Mammary epithelial cell (primary cell): ENCODE measurements at regions of chr7 and their contacts with region 1.

Region 1: GRCh38 chr7:144416341-144416740 is 12.8 kb upstream of the NOBOX start:
- DNase-seq: peak; percentile 88
- H3K4me3 ChIP-seq: no peak overlapping the region
- H3K27ac ChIP-seq: peak overlapping the region; percentile 78
- H3K4me1 ChIP-seq: peaks cover 30% of the 10 kb centered on the region
- H3K27me3 ChIP-seq: no peaks in the 10 kb centered on the region
- CTCF ChIP-seq: no peak

Region 2: GRCh38 chr7:144011458-144012230 is 404.7 kb before region 1 on chr7:
- CTCF ChIA-PET with region 1: no interaction called
- dilution Hi-C with region 1: no loop called
- in situ Hi-C with region 1: no loop called
- intact Hi-C with region 1: no loop called
- DNase-seq: peak; percentile 10
- H3K4me3 ChIP-seq: no peak overlapping the region
- H3K27ac ChIP-seq: no peak overlapping the region
- H3K4me1 ChIP-seq: no peaks in the 10 kb centered on the region
- H3K27me3 ChIP-seq: no peaks in the 10 kb centered on the region
- CTCF ChIP-seq: peak; percentile 30 to 47

Region 3: DNA sequence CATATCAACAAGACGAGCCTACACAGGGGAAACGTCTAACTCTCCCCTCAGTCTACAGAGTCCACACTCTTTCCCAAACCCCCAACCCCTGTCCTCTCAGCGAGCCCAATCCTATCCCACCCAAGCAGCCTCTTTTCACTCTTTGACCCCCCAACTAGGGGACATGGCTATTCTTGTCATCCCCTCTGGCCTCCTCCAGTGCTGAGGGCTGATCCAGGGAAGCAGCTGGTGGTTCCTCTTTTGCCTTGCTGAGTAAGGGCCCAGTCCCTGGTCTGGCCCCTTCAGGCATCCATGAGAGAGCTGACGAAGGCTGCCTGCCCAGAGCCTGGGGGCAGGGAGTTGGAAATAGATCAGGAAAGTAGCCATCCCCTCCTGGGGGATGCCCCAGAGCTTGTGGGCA is 19.3 kb before region 1 on chr7:
- CTCF ChIA-PET with region 1: no interaction called
- dilution Hi-C with region 1: no loop called
- in situ Hi-C with region 1: no loop called
- intact Hi-C with region 1: loop called (anchors 2 kb)
- DNase-seq: no peak
- H3K4me3 ChIP-seq: no peak overlapping the region
- H3K27ac ChIP-seq: no peak overlapping the region
- H3K4me1 ChIP-seq: peaks cover under 1% of the 10 kb centered on the region
- H3K27me3 ChIP-seq: no peaks in the 10 kb centered on the region
- CTCF ChIP-seq: no peak

Region 4: GRCh38 chr7:144474800-144475615 is 58.7 kb after region 1 on chr7:
- CTCF ChIA-PET with region 1: no interaction called
- dilution Hi-C with region 1: no loop called
- in situ Hi-C with region 1: no loop called
- intact Hi-C with region 1: no loop called
- DNase-seq: no peak
- H3K4me3 ChIP-seq: no peak overlapping the region
- H3K27ac ChIP-seq: no peak overlapping the region
- H3K4me1 ChIP-seq: no peaks in the 10 kb centered on the region
- H3K27me3 ChIP-seq: no peaks in the 10 kb centered on the region
- CTCF ChIP-seq: no peak